Activated CD4-positive, alpha-beta memory T cell treated with anti-CD3 and anti-CD28 coated beads, Interleukin-2, amount 10 ng/mL, durations not matched to agents 7 days and 5 days (primary cell): ENCODE measurements at regions of chr1 and their contacts with region 1.

Region 1: GRCh38 chr1:113783254-113784099 is 24.2 kb upstream of the PHTF1 start:
- DNase-seq: peak; percentile 66
- H3K4me3 Mint-ChIP-seq: peak overlapping the region; percentile 56
- H3K27ac Mint-ChIP-seq: peak overlapping the region; percentile 99
- H3K4me1 Mint-ChIP-seq: peaks cover 30% of the 10 kb centered on the region
- H3K27me3 Mint-ChIP-seq: no peaks in the 10 kb centered on the region

Region 2: DNA sequence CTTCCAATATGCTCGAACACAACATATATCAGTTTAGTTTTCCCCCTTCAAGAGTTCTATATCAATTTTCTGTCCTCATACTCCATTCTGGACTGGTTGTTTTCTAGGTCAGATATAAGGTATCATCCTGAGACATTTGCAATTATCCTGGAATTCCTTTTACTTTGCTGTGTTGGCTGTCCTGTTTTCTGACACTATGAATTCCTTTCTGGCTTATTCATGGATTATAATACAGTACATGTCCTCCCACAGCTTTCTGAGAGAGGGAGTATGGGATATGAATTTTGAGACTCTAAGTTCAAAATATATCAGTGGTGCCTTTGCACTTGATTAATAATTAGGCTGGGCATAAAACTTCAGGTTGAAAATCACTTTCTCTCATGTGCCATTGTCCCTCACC is 36.1 kb before region 1 on chr1:
- CTCF ChIA-PET with region 1: no interaction called
- POLR2A ChIA-PET with region 1: no interaction called
- DNase-seq: no peak
- H3K4me3 Mint-ChIP-seq: no peak overlapping the region
- H3K27ac Mint-ChIP-seq: no peak overlapping the region
- H3K4me1 Mint-ChIP-seq: peaks cover 26% of the 10 kb centered on the region
- H3K27me3 Mint-ChIP-seq: no peaks in the 10 kb centered on the region

Region 3: DNA sequence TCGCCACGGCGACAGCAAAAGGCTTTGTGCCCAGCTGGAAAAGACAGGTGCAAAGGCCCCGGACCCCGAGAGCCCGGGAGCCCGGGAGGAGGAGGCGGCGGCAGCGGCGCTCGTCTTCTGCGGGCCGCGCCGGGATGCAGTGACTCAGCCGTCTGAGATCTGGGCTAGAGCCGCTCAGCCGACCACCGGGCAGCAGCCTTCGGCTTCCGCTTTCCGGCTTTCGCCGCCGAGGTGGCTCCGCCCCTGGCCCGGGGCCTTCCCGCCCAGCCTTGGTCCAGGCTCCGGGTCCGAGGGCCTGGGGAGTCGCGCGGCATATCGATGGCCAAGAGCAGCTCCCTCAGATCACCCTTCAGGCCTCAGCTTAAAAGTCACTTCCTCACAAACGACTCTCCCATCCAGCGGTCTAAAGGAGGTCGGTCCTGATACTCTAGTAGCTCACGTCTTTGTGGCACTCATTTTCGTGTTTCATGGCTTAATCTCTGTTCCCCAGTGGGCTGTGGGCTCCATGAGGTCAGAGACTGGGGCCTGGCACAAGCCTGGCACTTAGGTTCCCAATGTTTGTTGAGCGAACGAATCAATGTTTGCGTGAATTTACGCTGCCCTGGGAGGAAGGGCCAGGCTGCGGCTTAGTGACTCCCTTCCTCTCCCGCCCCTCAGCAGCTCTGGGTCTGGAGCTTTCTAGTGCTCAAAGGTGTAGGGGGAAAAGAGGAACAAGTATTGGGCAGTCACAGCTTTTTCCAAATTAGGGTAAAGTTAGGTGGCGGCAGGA is 24.0 kb before region 1 on chr1 and contains the start of gene PHTF1:
- CTCF ChIA-PET with region 1: interaction called, 5 read pairs
- POLR2A ChIA-PET with region 1: interaction called, 37 read pairs
- DNase-seq: peak; percentile 69
- H3K4me3 Mint-ChIP-seq: peak within 1 kb of the TSS; percentile 88
- H3K27ac Mint-ChIP-seq: peak within 1 kb of the TSS; percentile 91
- H3K4me1 Mint-ChIP-seq: peaks cover 41% of the 10 kb centered on the region
- H3K27me3 Mint-ChIP-seq: no peaks in the 10 kb centered on the region
- total RNA-seq, gene PHTF1: 22.1 to 23.0 TPM

Region 4: DNA sequence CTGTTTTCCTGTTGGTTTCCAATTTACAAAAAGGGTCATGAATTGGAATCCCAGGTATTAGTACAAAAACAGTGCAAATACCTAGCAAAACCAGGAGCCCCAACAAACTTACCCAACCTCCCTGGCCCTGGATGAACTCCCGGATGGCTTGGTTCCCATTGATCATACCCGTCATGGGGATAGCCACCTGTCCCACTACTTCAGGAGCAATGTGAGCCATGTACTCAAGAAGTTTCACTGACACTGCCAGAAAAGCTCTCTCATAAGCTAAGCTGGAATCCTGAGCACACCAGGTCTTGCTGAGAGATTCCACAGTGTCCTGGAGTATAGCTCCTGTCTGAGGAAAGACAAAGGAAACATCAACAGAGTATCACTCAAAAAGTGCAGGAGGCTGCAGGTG is 98.2 kb after region 1 on chr1:
- CTCF ChIA-PET with region 1: no interaction called
- POLR2A ChIA-PET with region 1: no interaction called
- DNase-seq: no peak
- H3K4me3 Mint-ChIP-seq: no peak overlapping the region
- H3K27ac Mint-ChIP-seq: no peak overlapping the region
- H3K4me1 Mint-ChIP-seq: peaks cover 51% of the 10 kb centered on the region
- H3K27me3 Mint-ChIP-seq: no peaks in the 10 kb centered on the region